ENCODE measurements at regions of chr5 and their contacts with region 1.

Region 1: GRCh38 chr5:181223058-181223728 is at the start of gene TRIM41:
- DNase-seq: peak; percentile 98 to 100 (median 99)
- ATAC-seq: peak; percentile 85
- H3K4me3 ChIP-seq: peak within 1 kb of the TSS; percentile 67
- H3K4me1 ChIP-seq: peaks cover 9% of the 10 kb centered on the region
- CTCF ChIP-seq: no peak
- total RNA-seq, gene TRIM41: 25.6 to 34.0 (median 27.6) TPM

Region 2: DNA sequence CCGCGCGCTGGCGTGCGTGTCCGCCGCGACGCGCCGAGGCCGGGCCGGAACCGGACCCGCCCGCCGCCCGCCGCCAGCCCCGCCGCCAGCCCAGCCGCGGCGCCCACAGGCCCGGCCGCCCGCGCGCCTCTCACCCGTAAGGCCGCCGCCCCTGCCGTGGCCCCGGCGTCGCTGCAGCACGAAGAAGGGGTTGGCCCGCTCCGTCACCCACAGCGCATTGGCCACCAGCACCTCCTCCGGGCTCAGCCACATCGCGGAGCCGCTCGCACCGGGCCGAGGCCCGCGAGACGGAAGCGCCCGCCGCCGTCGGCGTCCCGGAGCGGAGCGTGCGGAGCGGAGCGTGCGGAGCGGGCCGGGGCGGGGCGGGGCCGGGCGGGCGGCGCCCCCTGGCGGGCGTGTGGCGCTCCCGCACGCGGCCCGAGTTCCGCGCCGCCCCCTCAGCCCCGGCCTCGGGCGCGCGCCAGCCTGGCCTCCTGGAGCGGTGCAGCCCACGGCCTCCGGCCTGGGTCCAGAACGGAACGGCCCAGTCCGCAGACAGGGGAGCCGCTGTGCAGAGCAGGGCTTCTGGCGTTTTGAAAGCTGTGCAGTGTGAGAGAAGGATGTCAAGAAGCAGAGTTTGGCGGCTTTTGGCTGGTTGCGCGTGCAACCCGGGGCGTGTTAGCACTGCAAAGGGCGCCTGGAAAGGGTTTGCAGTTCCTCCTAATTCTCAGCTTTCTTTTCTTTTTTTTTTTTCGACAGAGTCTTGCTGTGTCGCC is 1315.4 kb before region 1 on chr5 and contains the start of gene TBC1D9B:
- intact Hi-C with region 1: no loop called
- DNase-seq: peak; percentile 57 to 82 (median 80)
- ATAC-seq: peak; percentile 96
- H3K4me3 ChIP-seq: peak within 1 kb of the TSS; percentile 32
- H3K4me1 ChIP-seq: peaks cover 6% of the 10 kb centered on the region
- CTCF ChIP-seq: peak; percentile 75
- total RNA-seq, gene TBC1D9B: 115 to 117 (median 116) TPM

Region 3: DNA sequence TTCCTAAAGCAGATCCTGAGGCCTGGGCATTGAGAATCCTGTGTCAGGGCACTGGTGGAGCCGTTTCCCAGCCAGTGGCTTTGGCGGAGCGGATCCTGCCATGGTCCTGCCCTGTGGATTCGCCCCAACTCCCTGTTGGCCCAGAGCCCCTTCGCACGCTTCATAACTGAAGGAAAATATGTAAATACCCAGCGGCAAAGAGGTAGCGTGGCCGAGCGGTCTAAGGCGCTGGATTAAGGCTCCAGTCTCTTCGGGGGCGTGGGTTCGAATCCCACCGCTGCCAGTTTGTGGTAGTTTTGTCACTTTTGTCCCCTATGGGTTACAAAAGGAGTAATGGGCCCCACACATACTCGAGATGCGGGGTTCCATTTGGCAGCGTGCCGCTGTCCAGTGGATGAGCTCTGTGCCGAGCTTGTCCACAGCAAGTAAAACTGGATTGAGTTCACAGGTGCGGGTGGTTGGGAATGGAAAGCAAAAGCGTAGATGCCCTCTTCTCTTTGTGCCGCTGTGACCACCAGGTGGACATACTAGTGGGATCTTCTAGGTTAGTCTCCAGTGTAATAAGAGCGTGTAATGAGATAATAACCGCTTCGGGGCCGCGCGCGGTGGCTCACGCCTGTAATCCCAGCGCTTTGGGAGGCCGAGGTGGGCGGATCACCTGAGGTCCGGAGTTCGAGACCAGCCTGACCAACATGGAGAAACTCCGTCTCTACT is 35.5 kb before region 1 on chr5:
- intact Hi-C with region 1: loop called in 1 of 2 experiments (anchors 2 kb)
- DNase-seq: peak in 2 of 3 donors; percentile 68 to 78
- ATAC-seq: no peak
- H3K4me3 ChIP-seq: no peak overlapping the region
- H3K4me1 ChIP-seq: peaks cover 12% of the 10 kb centered on the region
- CTCF ChIP-seq: no peak

Region 4: GRCh38 chr5:181265092-181265671 is 42.0 kb after region 1 on chr5:
- intact Hi-C with region 1: no loop called
- DNase-seq: no peak
- ATAC-seq: no peak
- H3K4me3 ChIP-seq: no peak overlapping the region
- H3K4me1 ChIP-seq: peaks cover 5% of the 10 kb centered on the region
- CTCF ChIP-seq: no peak